A549 (cell line): ENCODE measurements at regions of chr11 and their contacts with region 1.

Region 1: GRCh38 chr11:125941619-125942611 is 3.9 kb upstream of the VSIG10L2 start:
- DNase-seq: peak; percentile 28 to 55
- ATAC-seq: peak; percentile 86 to 96
- H3K4me3 ChIP-seq: no peak overlapping the region
- H3K27ac ChIP-seq: no peak overlapping the region
- H3K4me1 ChIP-seq: no peaks in the 10 kb centered on the region
- CTCF ChIP-seq: peak; percentile 57
- EP300 ChIP-seq: no peak
- POLR2A ChIP-seq: no peak
- RAD21 ChIP-seq: peak; percentile 52 to 59

Region 2: GRCh38 chr11:125923012-125923579 is 18.8 kb before region 1 on chr11:
- CTCF ChIA-PET with region 1: interaction called, 38 read pairs
- POLR2A ChIA-PET with region 1: no interaction called
- DNase-seq: peak; percentile 65 to 71
- ATAC-seq: peak; percentile 92 to 95
- H3K4me3 ChIP-seq: no peak overlapping the region
- H3K27ac ChIP-seq: no peak overlapping the region
- H3K4me1 ChIP-seq: no peaks in the 10 kb centered on the region
- CTCF ChIP-seq: peak; percentile 84
- EP300 ChIP-seq: no peak
- POLR2A ChIP-seq: no peak
- RAD21 ChIP-seq: peak; percentile 87 to 89

Region 3: GRCh38 chr11:125929445-125930075 is 12.4 kb before region 1 on chr11:
- CTCF ChIA-PET with region 1: interaction called, 38 read pairs
- POLR2A ChIA-PET with region 1: no interaction called
- DNase-seq: no peak
- ATAC-seq: no peak
- H3K4me3 ChIP-seq: no peak overlapping the region
- H3K27ac ChIP-seq: no peak overlapping the region
- H3K4me1 ChIP-seq: no peaks in the 10 kb centered on the region
- CTCF ChIP-seq: no peak
- EP300 ChIP-seq: no peak
- POLR2A ChIP-seq: no peak
- RAD21 ChIP-seq: no peak

Region 4: GRCh38 chr11:126062679-126063506 is 121.0 kb after region 1 on chr11 and contains the start of gene CDON:
- CTCF ChIA-PET with region 1: interaction called, 26 read pairs
- POLR2A ChIA-PET with region 1: no interaction called
- DNase-seq: peak; percentile 90 to 95
- ATAC-seq: peak; percentile 92 to 96
- H3K4me3 ChIP-seq: peak within 1 kb of the TSS; percentile 87
- H3K27ac ChIP-seq: peak within 1 kb of the TSS; percentile 92
- H3K4me1 ChIP-seq: peaks cover 16% of the 10 kb centered on the region
- CTCF ChIP-seq: no peak
- EP300 ChIP-seq: no peak
- POLR2A ChIP-seq: no peak
- RAD21 ChIP-seq: 0 out of 5 replicates have a peak, but pooled peaks of 1 of the 2 experiments have one; percentile 12
- polyA plus RNA-seq, gene CDON: 5.6 and 7.8 TPM in 2 replicates

Region 5: DNA sequence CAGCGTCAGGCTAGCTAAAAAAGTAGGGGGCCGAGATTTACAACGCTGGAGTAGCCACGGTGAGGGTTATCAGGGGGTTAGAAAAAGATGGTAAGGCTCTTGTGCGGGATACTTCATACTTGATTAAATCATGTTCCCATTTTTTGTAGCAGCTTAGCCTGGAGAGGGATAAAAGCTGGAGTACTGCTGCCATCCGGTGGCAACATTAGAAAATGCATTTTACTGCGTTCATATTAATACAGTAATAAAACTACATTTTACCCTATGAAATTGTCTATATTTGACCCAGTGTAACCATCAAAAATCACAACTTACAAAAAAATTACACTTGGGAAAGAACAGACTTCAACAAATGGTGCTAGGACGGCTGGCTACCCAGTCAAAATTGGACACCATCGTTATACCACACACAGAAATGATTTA is 252.2 kb after region 1 on chr11:
- CTCF ChIA-PET with region 1: interaction called, 19 read pairs
- POLR2A ChIA-PET with region 1: no interaction called
- DNase-seq: peak; percentile 37 to 55
- ATAC-seq: peak; percentile 69 to 91; a peak in 5 of 6 replicates
- H3K4me3 ChIP-seq: no peak overlapping the region
- H3K27ac ChIP-seq: no peak overlapping the region
- H3K4me1 ChIP-seq: no peaks in the 10 kb centered on the region
- CTCF ChIP-seq: peak; percentile 77
- EP300 ChIP-seq: no peak
- POLR2A ChIP-seq: no peak
- RAD21 ChIP-seq: peak; percentile 86